ENCODE measurements at regions of chr3 and their contacts with region 1.

Region 1: GRCh38 chr3:181941250-181941649 is 229.5 kb downstream of the SOX2 start:
- DNase-seq: no peak
- H3K4me3 ChIP-seq: no peak overlapping the region
- H3K27ac ChIP-seq: no peak overlapping the region
- H3K27me3 ChIP-seq: no peaks in the 10 kb centered on the region
- CTCF ChIP-seq: no peak

Region 2: GRCh38 chr3:181752202-181752671 is 189.0 kb before region 1 on chr3:
- intact Hi-C with region 1: loop called in 1 of 2 experiments (anchors 10 kb)
- DNase-seq: peak in 7 of 10 donors; percentile 11 to 64 (median 51)
- H3K4me3 ChIP-seq: peak overlapping the region in 12 of 59 donors; percentile 0 to 42 (median 14)
- H3K27ac ChIP-seq: peak overlapping the region in 58 of 59 donors; percentile 30 to 92 (median 76)
- H3K27me3 ChIP-seq: peaks cover 0 to 24% (median 0%) of the 10 kb centered on the region in 45 donors
- CTCF ChIP-seq: peak in 2 of 56 donors; percentile 8

Region 3: DNA sequence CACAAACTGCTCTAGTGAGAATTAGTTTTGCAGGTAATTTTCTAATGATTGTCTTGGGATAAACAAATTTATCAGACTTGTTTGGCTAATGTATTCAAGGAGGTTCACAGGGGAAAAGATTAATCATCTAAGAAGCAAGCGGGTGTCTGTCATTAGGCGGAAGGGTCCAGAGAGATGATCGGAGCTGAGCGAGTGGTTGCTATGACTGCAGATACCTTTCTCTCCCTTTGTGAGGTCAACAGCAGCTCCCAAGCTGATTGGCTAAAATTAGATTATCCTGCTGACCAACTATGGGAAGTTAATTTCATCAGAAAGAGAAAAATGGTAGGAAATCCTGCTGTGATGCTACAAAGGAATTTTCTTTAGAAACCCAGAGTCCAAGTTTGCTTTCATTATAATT is 46.5 kb after region 1 on chr3:
- intact Hi-C with region 1: no loop called
- DNase-seq: no peak
- H3K4me3 ChIP-seq: no peak overlapping the region
- H3K27ac ChIP-seq: no peak overlapping the region
- H3K27me3 ChIP-seq: peaks cover 0 to 4% (median 0%) of the 10 kb centered on the region in 45 donors
- CTCF ChIP-seq: no peak